ENCODE measurements at regions of chr13 and their contacts with region 1.

Region 1: GRCh38 chr13:102580552-102581169 is 16.1 kb upstream of the TPP2 start:
- DNase-seq: peak; percentile 80
- ATAC-seq: peak; percentile 92
- H3K4me3 ChIP-seq: no peak overlapping the region
- H3K27ac ChIP-seq: no peak overlapping the region
- H3K4me1 ChIP-seq: no peaks in the 10 kb centered on the region
- H3K27me3 ChIP-seq: peaks cover 19% of the 10 kb centered on the region
- CTCF ChIP-seq: peak; percentile 84
- POLR2A ChIP-seq: no peak
- RAD21 ChIP-seq: peak; percentile 85

Region 2: DNA sequence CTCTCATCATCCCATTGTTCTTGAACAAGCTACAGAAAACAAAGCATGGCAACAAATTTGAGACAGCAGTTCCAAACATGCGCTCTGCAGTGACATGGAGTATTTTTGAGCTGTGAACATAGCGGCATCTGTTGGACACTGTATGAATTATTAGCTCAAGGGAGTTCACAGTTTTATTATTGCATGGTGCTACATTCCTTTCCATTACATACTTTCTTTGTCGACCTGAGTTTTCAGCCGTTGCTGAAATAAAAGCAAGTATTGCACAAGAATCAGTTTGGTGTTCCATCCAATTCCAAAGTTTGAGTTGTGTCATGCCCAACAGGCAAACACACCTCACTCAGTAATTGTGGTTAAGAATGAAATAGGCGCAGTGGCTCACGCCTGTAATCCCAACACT is 144.3 kb after region 1 on chr13:
- CTCF ChIA-PET with region 1: no interaction called
- POLR2A ChIA-PET with region 1: no interaction called
- dilution Hi-C with region 1: no loop called
- in situ Hi-C with region 1: no loop called
- intact Hi-C with region 1: loop called (anchors 2 kb)
- DNase-seq: peak; percentile 24
- ATAC-seq: peak; percentile 80
- H3K4me3 ChIP-seq: no peak overlapping the region
- H3K27ac ChIP-seq: no peak overlapping the region
- H3K4me1 ChIP-seq: no peaks in the 10 kb centered on the region
- H3K27me3 ChIP-seq: no peaks in the 10 kb centered on the region; the same call in 1 of the 2 replicates
- CTCF ChIP-seq: peak; percentile 40
- POLR2A ChIP-seq: no peak
- RAD21 ChIP-seq: peak; percentile 48

Region 3: DNA sequence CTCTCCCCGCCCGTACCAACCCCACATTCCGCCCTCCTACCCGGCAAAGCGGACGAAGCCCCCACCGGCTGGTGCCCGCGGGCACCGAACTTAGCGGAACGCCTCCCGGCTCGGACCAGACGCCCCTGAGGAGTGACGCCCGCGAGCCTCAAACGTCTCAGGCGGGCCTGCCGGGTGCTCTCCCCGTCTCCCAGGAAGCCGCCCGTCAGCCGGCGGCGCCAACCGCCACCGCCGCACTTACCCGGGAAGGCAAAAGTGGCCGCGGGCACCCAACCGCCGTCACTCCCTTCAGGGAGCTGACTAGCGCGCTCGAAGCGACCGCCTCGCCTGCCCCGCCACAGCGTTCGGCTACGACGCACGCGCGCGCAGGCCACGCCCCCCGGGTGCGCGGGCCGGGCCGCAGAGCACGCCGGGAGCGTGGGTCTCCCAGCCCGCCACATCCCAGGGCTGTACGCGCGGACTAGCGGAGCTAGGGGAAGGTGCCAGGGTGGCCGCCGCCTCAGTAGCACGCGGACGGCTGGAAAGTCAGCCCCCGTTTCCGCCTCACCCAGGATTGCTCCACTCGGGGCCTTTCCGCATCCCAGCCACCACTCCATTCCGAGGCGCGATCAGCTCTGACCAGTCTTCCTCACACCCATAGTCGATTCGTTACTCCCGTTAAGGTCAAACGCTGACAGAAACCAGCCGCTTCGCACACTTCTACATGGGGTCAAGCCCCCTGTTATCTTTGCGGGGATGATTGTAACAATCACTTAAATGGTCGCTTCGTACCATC is 193.0 kb after region 1 on chr13 and contains the start of gene TEX30:
- CTCF ChIA-PET with region 1: no interaction called
- POLR2A ChIA-PET with region 1: no interaction called
- dilution Hi-C with region 1: no loop called
- in situ Hi-C with region 1: no loop called
- intact Hi-C with region 1: loop called (anchors 1 kb)
- DNase-seq: peak; percentile 76
- ATAC-seq: peak; percentile 97
- H3K4me3 ChIP-seq: peak within 1 kb of the TSS; percentile 76
- H3K27ac ChIP-seq: peak within 1 kb of the TSS; percentile 85
- H3K4me1 ChIP-seq: peaks cover 2% of the 10 kb centered on the region; the same call in 1 of the 2 replicates
- H3K27me3 ChIP-seq: no peaks in the 10 kb centered on the region
- CTCF ChIP-seq: no peak
- POLR2A ChIP-seq: peak; percentile 92
- RAD21 ChIP-seq: 0 out of 2 replicates have a peak, but pooled peaks have one; percentile 2
- total RNA-seq, gene TEX30: 8.1 and 15.3 TPM in 2 replicates

Region 4: GRCh38 chr13:102800145-102801041 is 219.7 kb after region 1 on chr13:
- CTCF ChIA-PET with region 1: no interaction called
- POLR2A ChIA-PET with region 1: no interaction called
- dilution Hi-C with region 1: no loop called
- in situ Hi-C with region 1: no loop called
- intact Hi-C with region 1: loop called (anchors 1 kb)
- DNase-seq: peak; percentile 68
- ATAC-seq: peak; percentile 78
- H3K4me3 ChIP-seq: peak overlapping the region; percentile 84
- H3K27ac ChIP-seq: peak overlapping the region; percentile 68
- H3K4me1 ChIP-seq: 0 out of 2 replicates have a peak, but pooled peaks cover 3% of the 10 kb centered on the region
- H3K27me3 ChIP-seq: no peaks in the 10 kb centered on the region
- CTCF ChIP-seq: peak; percentile 66
- POLR2A ChIP-seq: peak; percentile 40; the same call in 1 of the 2 replicates
- RAD21 ChIP-seq: peak; percentile 25; the same call in 1 of the 2 replicates

Region 5: DNA sequence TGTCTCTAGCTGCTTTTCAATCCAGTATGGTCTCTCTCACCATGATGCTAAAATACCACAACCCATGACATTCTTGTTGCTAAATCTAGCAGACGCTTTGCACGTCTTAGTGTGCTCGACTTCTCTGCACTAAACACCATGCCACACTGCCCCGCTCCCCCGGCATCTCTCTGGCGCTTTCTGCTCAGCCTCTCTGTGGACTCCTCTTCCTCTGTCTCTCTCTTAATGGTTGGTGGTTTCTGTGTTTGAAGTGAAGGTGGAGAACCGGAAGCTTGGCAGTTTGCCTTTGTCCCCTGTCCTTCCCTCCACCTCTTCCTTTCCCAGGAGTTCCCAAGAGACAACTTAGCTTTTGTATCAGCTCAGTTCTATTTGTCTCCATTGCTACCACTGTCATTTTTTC is 274.0 kb after region 1 on chr13:
- CTCF ChIA-PET with region 1: interaction called, 4 read pairs
- POLR2A ChIA-PET with region 1: no interaction called
- dilution Hi-C with region 1: no loop called
- in situ Hi-C with region 1: loop called (anchors 5 kb)
- intact Hi-C with region 1: no loop called
- DNase-seq: no peak
- ATAC-seq: no peak
- H3K4me3 ChIP-seq: no peak overlapping the region
- H3K27ac ChIP-seq: no peak overlapping the region
- H3K4me1 ChIP-seq: no peaks in the 10 kb centered on the region
- H3K27me3 ChIP-seq: no peaks in the 10 kb centered on the region
- CTCF ChIP-seq: no peak
- POLR2A ChIP-seq: no peak
- RAD21 ChIP-seq: no peak